ENCODE measurements at regions of chr7 and their contacts with region 1.

Region 1: GRCh38 chr7:151244196-151244840 is 4.2 kb downstream of the SMARCD3 start:
- DNase-seq: peak; percentile 84
- ATAC-seq: peak; percentile 47
- H3K4me3 Mint-ChIP-seq: peak overlapping the region; percentile 29
- H3K27ac Mint-ChIP-seq: no peak overlapping the region
- H3K4me1 Mint-ChIP-seq: peaks cover 37% of the 10 kb centered on the region
- H3K27me3 Mint-ChIP-seq: peaks cover 20% of the 10 kb centered on the region
- CTCF ChIP-seq: peak; percentile 90

Region 2: GRCh38 chr7:151172273-151173141 is 71.8 kb before region 1 on chr7:
- CTCF ChIA-PET with region 1: interaction called, 16 read pairs
- POLR2A ChIA-PET with region 1: no interaction called
- intact Hi-C with region 1: no loop called
- DNase-seq: peak; percentile 84
- ATAC-seq: peak; percentile 88
- H3K4me3 Mint-ChIP-seq: no peak overlapping the region
- H3K27ac Mint-ChIP-seq: no peak overlapping the region
- H3K4me1 Mint-ChIP-seq: peaks cover 3% of the 10 kb centered on the region
- H3K27me3 Mint-ChIP-seq: peaks cover 53% of the 10 kb centered on the region
- CTCF ChIP-seq: peak; percentile 100

Region 3: DNA sequence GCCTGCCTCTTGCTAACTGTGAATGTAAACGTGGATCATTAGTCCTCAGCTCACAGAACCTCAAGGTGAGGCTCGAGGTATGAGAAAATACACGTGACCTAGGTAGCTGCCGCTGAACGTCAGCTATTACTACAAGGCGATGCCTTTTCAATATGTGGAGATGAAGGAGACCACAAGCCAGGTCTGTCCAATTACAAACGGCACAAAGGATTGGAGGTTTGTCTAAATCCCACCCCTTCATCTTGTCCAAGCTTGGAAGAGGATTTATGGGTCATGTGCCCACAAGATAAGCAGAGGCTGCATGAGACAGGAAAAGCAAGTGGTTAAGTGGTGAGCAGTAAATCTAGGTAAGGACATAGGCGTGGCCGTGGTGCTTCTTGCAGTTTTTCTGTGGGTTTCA is 37.4 kb before region 1 on chr7:
- CTCF ChIA-PET with region 1: interaction called, 11 read pairs
- POLR2A ChIA-PET with region 1: no interaction called
- intact Hi-C with region 1: no loop called
- DNase-seq: peak; percentile 16
- ATAC-seq: peak; percentile 64
- H3K4me3 Mint-ChIP-seq: no peak overlapping the region
- H3K27ac Mint-ChIP-seq: peak overlapping the region; percentile 12
- H3K4me1 Mint-ChIP-seq: peaks cover 20% of the 10 kb centered on the region
- H3K27me3 Mint-ChIP-seq: no peaks in the 10 kb centered on the region
- CTCF ChIP-seq: no peak

Region 4: DNA sequence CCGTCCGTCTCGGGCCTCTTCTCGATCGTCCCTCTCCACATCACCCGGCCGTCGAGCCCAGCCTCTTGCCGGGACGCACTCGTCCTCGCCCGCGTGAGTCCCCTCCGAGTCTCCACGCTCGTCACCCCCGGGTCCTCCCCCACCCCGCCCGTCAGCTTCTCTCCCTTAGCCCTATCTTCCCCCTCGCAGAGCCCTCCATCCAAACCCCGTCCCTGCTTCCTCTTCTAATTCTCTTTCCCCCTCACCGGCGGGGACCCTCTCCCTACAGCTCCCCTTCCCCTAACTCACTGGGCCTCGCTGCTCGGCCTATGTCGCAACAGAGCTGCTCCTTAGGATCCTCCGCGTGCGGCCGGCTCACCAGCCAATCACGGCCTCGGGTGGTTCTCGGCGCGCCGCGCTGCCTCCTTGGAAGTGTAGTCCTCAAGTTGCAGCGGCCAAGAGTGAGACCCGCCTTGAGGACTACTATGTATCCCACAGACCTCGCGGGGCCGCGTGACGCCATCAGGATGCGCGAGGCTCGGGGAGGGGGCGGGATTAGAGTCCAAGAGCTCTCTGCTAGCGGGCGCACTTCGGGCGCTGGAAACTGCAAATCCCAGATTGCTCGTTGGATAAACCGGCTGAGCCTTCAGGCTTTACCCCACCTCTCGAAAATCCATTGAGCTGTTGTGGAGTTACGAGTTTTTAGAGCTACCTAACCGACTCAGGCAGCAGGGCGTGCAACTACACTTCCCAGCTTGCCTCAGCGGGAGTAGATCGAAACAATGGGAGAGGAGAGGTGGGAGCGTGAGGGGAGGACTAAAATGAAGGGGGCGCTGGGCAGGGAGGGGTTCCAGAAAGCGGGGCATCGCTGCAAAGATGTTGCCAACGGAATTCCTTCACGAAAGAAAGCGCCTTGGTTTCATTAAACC is 17.2 kb before region 1 on chr7 and contains the start of gene ABCF2:
- CTCF ChIA-PET with region 1: interaction called, 68 read pairs
- POLR2A ChIA-PET with region 1: interaction called, 23 read pairs
- intact Hi-C with region 1: no loop called
- DNase-seq: peak; percentile 100
- ATAC-seq: peak; percentile 99
- H3K4me3 Mint-ChIP-seq: peak within 1 kb of the TSS; percentile 99
- H3K27ac Mint-ChIP-seq: peak within 1 kb of the TSS; percentile 96
- H3K4me1 Mint-ChIP-seq: peaks cover 34% of the 10 kb centered on the region
- H3K27me3 Mint-ChIP-seq: no peaks in the 10 kb centered on the region
- CTCF ChIP-seq: no peak
- total RNA-seq, gene ABCF2: 48.1 to 56.2 TPM

Region 5: GRCh38 chr7:151232091-151232916 is 12.0 kb before region 1 on chr7 and contains the start of gene CHPF2:
- CTCF ChIA-PET with region 1: interaction called, 68 read pairs
- POLR2A ChIA-PET with region 1: interaction called, 23 read pairs
- intact Hi-C with region 1: no loop called
- DNase-seq: peak; percentile 95
- ATAC-seq: peak; percentile 85
- H3K4me3 Mint-ChIP-seq: peak within 1 kb of the TSS; percentile 100
- H3K27ac Mint-ChIP-seq: peak within 1 kb of the TSS; percentile 100
- H3K4me1 Mint-ChIP-seq: peaks cover 34% of the 10 kb centered on the region
- H3K27me3 Mint-ChIP-seq: no peaks in the 10 kb centered on the region
- CTCF ChIP-seq: no peak
- total RNA-seq, gene CHPF2: 23.7 to 27.3 TPM

Region 6: GRCh38 chr7:151261529-151261928 is 17.2 kb after region 1 on chr7:
- CTCF ChIA-PET with region 1: interaction called, 14 read pairs
- POLR2A ChIA-PET with region 1: interaction called, 3 read pairs
- intact Hi-C with region 1: no loop called
- DNase-seq: no peak
- ATAC-seq: no peak
- H3K4me3 Mint-ChIP-seq: no peak overlapping the region
- H3K27ac Mint-ChIP-seq: no peak overlapping the region
- H3K4me1 Mint-ChIP-seq: no peaks in the 10 kb centered on the region
- H3K27me3 Mint-ChIP-seq: no peaks in the 10 kb centered on the region
- CTCF ChIP-seq: no peak

Region 7: GRCh38 chr7:151304856-151305255 is 60.5 kb after region 1 on chr7:
- CTCF ChIA-PET with region 1: interaction called, 23 read pairs
- POLR2A ChIA-PET with region 1: no interaction called
- intact Hi-C with region 1: loop called (anchors 5 kb)
- DNase-seq: no peak
- ATAC-seq: no peak
- H3K4me3 Mint-ChIP-seq: peak overlapping the region; percentile 23
- H3K27ac Mint-ChIP-seq: no peak overlapping the region
- H3K4me1 Mint-ChIP-seq: peaks cover 6% of the 10 kb centered on the region
- H3K27me3 Mint-ChIP-seq: peaks cover 24% of the 10 kb centered on the region
- CTCF ChIP-seq: no peak

Region 8: DNA sequence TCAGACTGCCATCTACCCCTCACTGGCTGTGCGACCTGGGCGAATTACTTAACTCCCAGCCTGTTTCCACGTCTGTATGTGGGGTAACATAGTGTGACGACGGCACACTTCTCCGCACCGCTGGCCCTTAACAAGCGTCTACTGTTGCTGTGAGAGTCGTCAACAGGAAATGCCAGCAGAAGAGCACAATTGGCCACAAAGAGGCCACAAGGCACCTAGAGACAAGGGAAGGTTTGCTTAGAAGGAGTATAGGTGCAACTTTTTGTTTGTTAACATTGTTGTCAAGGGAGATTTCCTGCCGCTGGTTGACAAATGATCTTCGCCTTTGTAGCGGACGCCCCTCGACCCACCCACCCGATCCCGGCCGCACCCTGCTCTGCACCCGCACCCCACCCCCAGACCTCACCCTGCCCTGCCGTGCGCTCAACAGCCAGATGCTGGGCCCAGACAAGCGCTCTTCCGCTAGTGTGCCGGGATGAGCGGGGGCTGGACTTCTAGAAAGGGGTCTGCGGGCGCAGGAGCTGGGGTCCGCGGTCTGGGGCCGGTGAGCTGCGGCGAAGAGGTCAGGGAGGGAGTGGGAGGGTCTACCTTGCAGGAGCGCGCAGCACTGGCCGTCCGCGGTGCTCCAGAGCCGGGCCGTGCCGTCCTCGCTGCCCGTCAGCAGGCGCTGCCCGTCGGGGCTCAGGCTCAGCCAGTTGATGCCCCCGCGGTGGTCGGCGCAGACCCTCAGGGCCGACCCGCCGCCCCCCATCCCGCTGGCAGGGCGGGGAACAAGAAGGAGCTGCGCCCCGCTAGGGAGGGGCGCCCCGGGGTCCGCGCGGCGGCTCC is 164.7 kb after region 1 on chr7:
- CTCF ChIA-PET with region 1: no interaction called
- POLR2A ChIA-PET with region 1: no interaction called
- intact Hi-C with region 1: no loop called
- DNase-seq: peak; percentile 60
- ATAC-seq: peak; percentile 74
- H3K4me3 Mint-ChIP-seq: peak overlapping the region; percentile 64
- H3K27ac Mint-ChIP-seq: peak overlapping the region; percentile 24
- H3K4me1 Mint-ChIP-seq: peaks cover 28% of the 10 kb centered on the region
- H3K27me3 Mint-ChIP-seq: peaks cover 30% of the 10 kb centered on the region
- CTCF ChIP-seq: no peak

Measured in activated CD8-positive, alpha-beta T cell treated with anti-CD3 and anti-CD28 coated beads for 36 hours (primary cell).